ENCODE measurements at regions of chr6 and their contacts with region 1.

Region 1: DNA sequence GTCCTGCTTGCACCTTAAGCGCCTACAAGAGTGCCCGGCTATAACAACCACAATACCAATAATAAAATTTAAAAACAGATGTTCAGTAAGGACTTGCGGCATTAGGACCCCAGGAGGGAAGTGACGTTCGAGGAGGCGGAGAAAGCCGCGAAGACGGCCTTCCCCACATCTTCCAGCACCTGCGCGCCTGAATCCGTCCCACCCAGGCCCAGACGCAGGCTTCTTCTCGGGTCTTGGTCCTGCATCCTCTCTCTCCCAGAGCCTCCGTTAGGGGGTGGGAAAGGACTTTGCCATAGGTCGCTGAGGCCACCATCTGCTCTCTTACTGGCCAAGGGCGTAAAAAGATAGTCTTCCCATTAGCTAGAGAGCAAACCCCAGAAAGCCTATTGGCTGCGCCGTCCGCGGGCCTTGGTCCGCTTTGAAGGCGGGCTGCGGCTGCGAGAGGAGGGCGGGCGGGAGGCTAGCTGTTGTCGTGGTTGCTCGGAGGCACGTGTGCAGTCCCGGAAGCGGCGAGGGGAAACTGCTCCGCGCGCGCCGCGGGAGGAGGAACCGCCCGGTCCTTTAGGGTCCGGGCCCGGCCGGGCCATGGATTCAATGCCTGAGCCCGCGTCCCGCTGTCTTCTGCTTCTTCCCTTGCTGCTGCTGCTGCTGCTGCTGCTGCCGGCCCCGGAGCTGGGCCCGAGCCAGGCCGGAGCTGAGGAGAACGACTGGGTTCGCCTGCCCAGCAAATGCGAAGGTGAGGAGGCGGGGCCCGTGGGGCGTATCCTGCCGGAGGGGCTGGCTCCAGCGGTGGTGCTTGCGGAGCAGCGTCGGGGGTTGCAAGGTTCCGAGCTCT is at the start of gene CNPY3:
- DNase-seq: peak; percentile 95 to 98 (median 96)
- ATAC-seq: peak; percentile 91 to 95 (median 93)
- H3K4me3 ChIP-seq: peak within 1 kb of the TSS; percentile 72 to 81 (median 80)
- H3K27ac ChIP-seq: peak within 1 kb of the TSS; percentile 68 to 89 (median 88)
- H3K4me1 ChIP-seq: peaks cover 0 to 31% (median 9%) of the 10 kb centered on the region in 4 donors
- H3K27me3 ChIP-seq: no peaks in the 10 kb centered on the region
- CTCF ChIP-seq: no peak
- POLR2A ChIP-seq: peak; percentile 61
- total RNA-seq, gene CNPY3: 11.1 to 75.4 (median 28.8) TPM

Region 2: DNA sequence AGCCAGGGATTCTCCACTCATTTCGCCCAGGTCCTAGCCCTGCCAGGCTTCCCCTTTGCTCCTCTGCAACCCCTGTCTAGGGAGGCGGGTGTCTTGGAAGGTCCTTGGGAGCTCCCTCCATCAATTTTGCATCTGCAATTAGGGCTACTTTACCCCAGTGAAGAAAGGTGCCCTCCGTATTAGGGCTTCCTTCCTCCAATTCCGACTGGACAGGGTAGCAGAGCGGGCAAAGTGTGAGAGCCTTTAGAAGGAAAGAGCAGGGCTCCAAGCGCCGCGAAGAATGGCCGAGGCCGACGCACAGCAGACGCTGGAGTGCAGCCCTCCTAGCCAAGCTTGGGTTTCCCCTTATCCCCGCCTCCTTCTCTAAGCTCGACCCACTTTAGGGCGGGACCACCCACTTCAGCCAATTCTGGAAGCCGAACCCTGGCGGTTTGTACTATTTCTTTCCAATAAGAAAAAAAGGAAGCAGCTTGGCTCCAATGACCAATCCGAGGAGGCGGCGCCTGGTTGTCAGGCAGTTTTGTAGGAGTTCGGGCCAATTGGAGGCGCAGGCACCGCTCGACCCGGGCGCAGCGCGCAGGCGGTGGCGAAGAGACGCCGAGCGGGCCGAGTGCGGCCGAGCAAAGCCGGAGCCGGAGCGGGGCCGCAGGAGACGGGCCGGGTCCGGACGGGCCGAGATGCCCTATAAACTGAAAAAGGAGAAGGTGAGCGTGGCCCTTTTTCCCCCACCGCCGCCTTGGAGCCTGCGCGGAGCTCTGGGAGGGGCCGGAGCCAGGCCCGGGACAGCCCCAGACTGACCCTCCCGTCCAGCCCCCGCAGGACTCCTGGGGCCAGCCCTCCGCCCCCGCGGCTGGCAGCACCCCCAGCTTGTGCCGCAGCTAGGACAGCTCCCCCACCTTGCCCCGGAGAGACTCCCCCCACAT is 55.1 kb after region 1 on chr6 and contains the start of gene PPP2R5D:
- intact Hi-C with region 1: loop called in 1 of 2 experiments (anchors 10 kb)
- DNase-seq: peak; percentile 96 to 98 (median 98)
- ATAC-seq: peak; percentile 94 to 96 (median 96)
- H3K4me3 ChIP-seq: peak within 1 kb of the TSS; percentile 87 to 90 (median 89)
- H3K27ac ChIP-seq: peak within 1 kb of the TSS; percentile 52 to 66 (median 60)
- H3K4me1 ChIP-seq: peaks cover 0 to 27% (median 3%) of the 10 kb centered on the region in 4 donors
- H3K27me3 ChIP-seq: no peaks in the 10 kb centered on the region
- CTCF ChIP-seq: peak in 2 of 4 donors; percentile 6 to 17
- POLR2A ChIP-seq: peak; percentile 85
- total RNA-seq, gene PPP2R5D: 11.5 to 24.0 (median 16.3) TPM

Measured in right lobe of liver (tissue), 6 donors.